ENCODE measurements at regions of chr7 and their contacts with region 1.

Region 1: GRCh38 chr7:73451780-73452398 is 18.3 kb downstream of the FZD9 start:
- DNase-seq: no peak
- ATAC-seq: peak; percentile 93
- H3K4me3 Mint-ChIP-seq: no peak overlapping the region
- H3K27ac Mint-ChIP-seq: no peak overlapping the region
- H3K4me1 Mint-ChIP-seq: no peaks in the 10 kb centered on the region
- H3K27me3 Mint-ChIP-seq: no peaks in the 10 kb centered on the region
- CTCF ChIP-seq: peak; percentile 96

Region 2: DNA sequence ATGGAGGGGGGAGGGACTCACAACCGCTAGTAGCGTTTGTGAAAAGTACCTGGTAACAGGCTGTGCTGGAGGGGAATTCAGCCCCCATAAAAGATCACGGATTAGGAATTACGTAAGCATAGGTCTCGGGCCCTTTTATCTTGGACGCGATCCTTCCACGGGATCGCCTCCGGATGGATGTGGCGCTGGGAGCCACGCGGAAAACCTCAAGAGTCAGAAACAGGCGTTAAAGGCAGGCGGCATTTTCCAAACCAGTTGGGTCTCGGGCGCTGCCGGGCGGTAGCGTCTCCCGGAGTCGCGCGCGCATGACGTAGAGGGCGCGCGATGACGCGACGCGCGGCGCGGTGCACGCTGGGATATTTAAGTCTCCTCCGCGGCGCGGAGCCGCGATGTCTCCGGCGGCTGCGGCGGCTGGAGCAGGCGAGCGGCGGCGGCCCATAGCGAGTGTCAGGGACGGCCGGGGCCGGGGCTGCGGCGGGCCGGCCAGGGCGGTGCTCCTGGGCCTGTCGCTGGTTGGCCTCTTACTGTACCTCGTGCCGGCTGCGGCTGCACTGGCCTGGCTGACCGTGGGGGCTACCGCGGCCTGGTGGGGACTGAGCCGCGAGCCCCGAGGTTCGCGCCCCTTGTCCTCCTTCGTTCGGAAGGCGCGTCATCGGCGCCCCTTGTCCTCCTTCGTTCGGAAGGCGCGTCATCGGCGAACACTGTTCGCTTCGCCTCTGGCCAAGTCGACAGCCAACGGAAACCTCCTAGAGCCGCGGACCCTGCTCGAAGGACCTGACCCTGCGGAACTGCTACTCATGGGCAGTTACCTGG is 527.0 kb before region 1 on chr7 and contains the start of gene POM121:
- CTCF ChIA-PET with region 1: no interaction called
- POLR2A ChIA-PET with region 1: no interaction called
- intact Hi-C with region 1: loop called (anchors 5 kb)
- DNase-seq: peak; percentile 89
- ATAC-seq: peak; percentile 92
- H3K4me3 Mint-ChIP-seq: peak within 1 kb of the TSS; percentile 100
- H3K27ac Mint-ChIP-seq: peak within 1 kb of the TSS; percentile 98
- H3K4me1 Mint-ChIP-seq: peaks cover 31% of the 10 kb centered on the region
- H3K27me3 Mint-ChIP-seq: no peaks in the 10 kb centered on the region
- CTCF ChIP-seq: no peak
- total RNA-seq, gene POM121: 42.6 and 46.7 TPM in 2 replicates

Region 3: GRCh38 chr7:73328696-73329095 is 123.2 kb before region 1 on chr7:
- CTCF ChIA-PET with region 1: interaction called, 14 read pairs
- POLR2A ChIA-PET with region 1: no interaction called
- intact Hi-C with region 1: loop called (anchors 1 kb)
- DNase-seq: no peak
- ATAC-seq: no peak
- H3K4me3 Mint-ChIP-seq: no peak overlapping the region
- H3K27ac Mint-ChIP-seq: no peak overlapping the region
- H3K4me1 Mint-ChIP-seq: peaks cover 7% of the 10 kb centered on the region
- H3K27me3 Mint-ChIP-seq: peaks cover 6% of the 10 kb centered on the region
- CTCF ChIP-seq: no peak

Region 4: DNA sequence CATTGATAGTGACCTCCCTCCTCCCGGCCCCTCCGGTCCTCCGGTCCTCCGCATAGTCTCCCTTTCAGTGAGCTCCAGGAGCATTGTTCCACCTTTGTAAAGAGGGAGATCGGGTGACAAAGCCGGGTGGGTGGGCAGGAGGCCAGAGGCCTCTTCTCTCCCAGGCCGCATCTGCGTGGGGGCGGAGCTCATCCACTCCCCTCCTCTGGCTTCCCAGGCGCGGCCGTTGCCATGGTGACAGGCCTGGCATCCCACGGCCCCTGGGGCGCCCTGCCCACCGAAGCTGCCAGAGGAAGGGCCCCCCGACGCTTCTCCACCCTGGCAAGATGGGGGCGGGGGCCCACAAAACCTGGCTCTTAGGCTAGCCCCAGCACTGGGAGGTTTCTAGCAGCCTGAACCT is 22.7 kb before region 1 on chr7:
- CTCF ChIA-PET with region 1: no interaction called
- POLR2A ChIA-PET with region 1: no interaction called
- intact Hi-C with region 1: no loop called
- DNase-seq: no peak
- ATAC-seq: no peak
- H3K4me3 Mint-ChIP-seq: no peak overlapping the region
- H3K27ac Mint-ChIP-seq: no peak overlapping the region
- H3K4me1 Mint-ChIP-seq: peaks cover 6% of the 10 kb centered on the region
- H3K27me3 Mint-ChIP-seq: peaks cover 11% of the 10 kb centered on the region
- CTCF ChIP-seq: no peak

Region 5: GRCh38 chr7:73463966-73464365 is 12.1 kb after region 1 on chr7:
- CTCF ChIA-PET with region 1: interaction called, 10 read pairs
- POLR2A ChIA-PET with region 1: no interaction called
- intact Hi-C with region 1: no loop called
- DNase-seq: no peak
- ATAC-seq: no peak
- H3K4me3 Mint-ChIP-seq: no peak overlapping the region
- H3K27ac Mint-ChIP-seq: no peak overlapping the region
- H3K4me1 Mint-ChIP-seq: no peaks in the 10 kb centered on the region
- H3K27me3 Mint-ChIP-seq: no peaks in the 10 kb centered on the region
- CTCF ChIP-seq: no peak